Activated T-helper 1 cell treated with anti-CD3 and anti-CD28 coated beads, Interleukin-12 subunit alpha, Interleukin-12 subunit beta, Interleukin-2, Interleukin-4 antibody, amounts not matched to agents 30 ng/mL and 10 ng/mL and 1 ng/mL, durations not matched to agents 14 hours and 24 hours and 36 hours (primary cell): ENCODE measurements at regions of chr17 and their contacts with region 1.

Region 1: GRCh38 chr17:76506408-76507349 is 5.5 kb upstream of the RHBDF2 start:
- DNase-seq: peak; percentile 85
- H3K4me3 Mint-ChIP-seq: no peak overlapping the region
- H3K27ac Mint-ChIP-seq: peak overlapping the region; percentile 58
- H3K4me1 Mint-ChIP-seq: peaks cover 41% of the 10 kb centered on the region
- H3K27me3 Mint-ChIP-seq: peaks cover 2% of the 10 kb centered on the region

Region 2: DNA sequence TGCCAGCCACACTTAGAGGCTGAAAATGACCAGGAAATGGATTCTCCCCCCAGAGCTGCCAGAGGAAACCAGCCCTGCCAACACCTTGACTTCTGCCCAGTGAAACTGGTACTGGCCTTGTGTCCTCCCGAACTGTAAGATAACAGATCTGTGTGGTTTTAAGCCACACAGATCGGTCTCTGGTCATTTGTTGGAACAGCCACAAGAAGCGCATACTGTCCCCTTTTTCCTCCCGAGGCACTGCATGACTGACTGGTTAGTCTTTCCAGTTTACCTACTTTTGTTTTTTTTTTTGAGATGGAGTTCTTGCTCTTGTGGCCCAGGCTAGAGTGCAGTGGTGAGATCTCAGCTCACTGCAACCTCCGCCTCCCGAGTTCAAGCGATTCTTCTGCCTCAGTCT is 204.1 kb before region 1 on chr17:
- intact Hi-C with region 1: loop called (anchors 1 kb)
- DNase-seq: no peak
- H3K4me3 Mint-ChIP-seq: no peak overlapping the region
- H3K27ac Mint-ChIP-seq: no peak overlapping the region
- H3K4me1 Mint-ChIP-seq: peaks cover 5% of the 10 kb centered on the region
- H3K27me3 Mint-ChIP-seq: no peaks in the 10 kb centered on the region

Region 3: GRCh38 chr17:76408052-76408849 is 98.4 kb before region 1 on chr17:
- intact Hi-C with region 1: loop called (anchors 1 kb)
- DNase-seq: peak; percentile 42
- H3K4me3 Mint-ChIP-seq: no peak overlapping the region
- H3K27ac Mint-ChIP-seq: no peak overlapping the region
- H3K4me1 Mint-ChIP-seq: peaks cover 6% of the 10 kb centered on the region
- H3K27me3 Mint-ChIP-seq: no peaks in the 10 kb centered on the region

Region 4: GRCh38 chr17:76466775-76467130 is 39.9 kb before region 1 on chr17:
- intact Hi-C with region 1: loop called (anchors 1 kb)
- DNase-seq: no peak
- H3K4me3 Mint-ChIP-seq: no peak overlapping the region
- H3K27ac Mint-ChIP-seq: no peak overlapping the region
- H3K4me1 Mint-ChIP-seq: peaks cover 9% of the 10 kb centered on the region
- H3K27me3 Mint-ChIP-seq: peaks cover under 1% of the 10 kb centered on the region

Region 5: GRCh38 chr17:76523084-76524037 is 16.7 kb after region 1 on chr17:
- intact Hi-C with region 1: no loop called
- DNase-seq: peak; percentile 76
- H3K4me3 Mint-ChIP-seq: peak overlapping the region; percentile 30
- H3K27ac Mint-ChIP-seq: no peak overlapping the region
- H3K4me1 Mint-ChIP-seq: peaks cover 21% of the 10 kb centered on the region
- H3K27me3 Mint-ChIP-seq: peaks cover 10% of the 10 kb centered on the region